ENCODE measurements at regions of chr12 and their contacts with region 1.

Region 1: DNA sequence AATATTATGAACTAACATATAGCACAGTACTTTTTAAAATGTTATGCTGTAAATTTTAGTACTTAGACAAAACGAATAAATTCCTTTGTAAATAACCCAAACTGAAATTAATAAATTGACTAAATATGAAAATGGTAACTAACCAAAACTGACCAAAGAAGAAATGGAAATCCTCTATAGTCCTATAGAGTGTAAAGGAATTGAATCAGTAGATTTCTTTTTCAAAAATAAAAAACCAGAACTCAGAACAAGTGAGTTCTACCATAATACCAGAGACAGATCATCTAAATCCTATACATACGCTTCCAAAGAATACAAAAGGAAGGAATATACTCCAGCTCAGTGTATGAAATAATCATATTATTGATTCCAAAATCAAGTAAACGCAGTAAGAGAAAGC is 39.8 kb downstream of the TMPRSS12 start:
- DNase-seq: no peak
- ATAC-seq: no peak
- H3K4me3 Mint-ChIP-seq: no peak overlapping the region
- H3K27ac Mint-ChIP-seq: no peak overlapping the region
- H3K4me1 Mint-ChIP-seq: peaks cover 9% of the 10 kb centered on the region
- H3K27me3 Mint-ChIP-seq: no peaks in the 10 kb centered on the region
- CTCF ChIP-seq: no peak

Region 2: DNA sequence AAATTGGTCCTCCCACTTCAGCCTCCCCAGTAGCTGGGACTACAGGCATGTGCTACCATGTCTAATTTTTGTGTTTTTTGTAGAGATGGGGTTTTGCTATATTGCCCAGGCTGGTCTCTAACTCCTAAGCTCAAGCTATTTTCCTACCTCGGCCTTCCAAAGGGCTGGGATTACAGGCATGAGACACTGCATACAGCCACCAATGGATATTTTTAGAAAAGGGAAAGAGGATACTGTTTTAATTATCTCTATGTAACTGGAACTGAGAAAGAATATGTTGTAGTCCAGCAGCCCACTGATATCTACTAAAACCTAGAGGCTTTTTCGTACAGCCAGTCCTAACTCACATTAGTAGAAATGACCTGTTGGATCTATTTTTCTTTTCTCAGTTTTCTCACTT is 33.6 kb before region 1 on chr12:
- CTCF ChIA-PET with region 1: no interaction called
- POLR2A ChIA-PET with region 1: no interaction called
- intact Hi-C with region 1: no loop called
- DNase-seq: no peak
- ATAC-seq: no peak
- H3K4me3 Mint-ChIP-seq: no peak overlapping the region
- H3K27ac Mint-ChIP-seq: no peak overlapping the region
- H3K4me1 Mint-ChIP-seq: no peaks in the 10 kb centered on the region
- H3K27me3 Mint-ChIP-seq: peaks cover 12% of the 10 kb centered on the region
- CTCF ChIP-seq: no peak

Region 3: GRCh38 chr12:50862316-50862715 is 20.2 kb before region 1 on chr12:
- CTCF ChIA-PET with region 1: no interaction called
- POLR2A ChIA-PET with region 1: no interaction called
- intact Hi-C with region 1: no loop called
- DNase-seq: no peak
- ATAC-seq: no peak
- H3K4me3 Mint-ChIP-seq: no peak overlapping the region
- H3K27ac Mint-ChIP-seq: no peak overlapping the region
- H3K4me1 Mint-ChIP-seq: no peaks in the 10 kb centered on the region
- H3K27me3 Mint-ChIP-seq: no peaks in the 10 kb centered on the region
- CTCF ChIP-seq: no peak

Region 4: DNA sequence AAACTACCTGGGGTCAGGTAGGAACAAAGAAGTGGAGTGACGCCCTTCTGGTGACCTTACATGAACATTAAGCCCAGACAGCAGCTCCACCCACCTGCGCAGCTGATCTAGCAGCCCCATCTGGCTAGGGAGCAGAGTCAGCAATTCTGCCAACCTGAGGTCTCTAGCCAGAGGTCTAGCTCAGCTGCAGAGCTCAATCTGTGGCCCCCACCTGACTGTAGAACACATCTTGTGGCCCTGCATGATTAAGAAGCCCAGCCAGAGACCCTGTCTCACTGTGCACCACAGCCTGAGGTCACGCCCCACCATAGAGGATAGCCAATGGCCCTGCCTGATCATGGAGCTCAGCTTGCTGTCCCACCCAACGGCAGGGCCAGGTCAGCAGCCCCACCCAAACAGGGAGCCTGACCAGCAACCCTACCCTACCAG is 19.1 kb after region 1 on chr12:
- CTCF ChIA-PET with region 1: no interaction called
- POLR2A ChIA-PET with region 1: interaction called, 10 read pairs
- intact Hi-C with region 1: no loop called
- DNase-seq: no peak
- ATAC-seq: no peak
- H3K4me3 Mint-ChIP-seq: no peak overlapping the region
- H3K27ac Mint-ChIP-seq: no peak overlapping the region
- H3K4me1 Mint-ChIP-seq: no peaks in the 10 kb centered on the region
- H3K27me3 Mint-ChIP-seq: no peaks in the 10 kb centered on the region
- CTCF ChIP-seq: no peak

Region 5: DNA sequence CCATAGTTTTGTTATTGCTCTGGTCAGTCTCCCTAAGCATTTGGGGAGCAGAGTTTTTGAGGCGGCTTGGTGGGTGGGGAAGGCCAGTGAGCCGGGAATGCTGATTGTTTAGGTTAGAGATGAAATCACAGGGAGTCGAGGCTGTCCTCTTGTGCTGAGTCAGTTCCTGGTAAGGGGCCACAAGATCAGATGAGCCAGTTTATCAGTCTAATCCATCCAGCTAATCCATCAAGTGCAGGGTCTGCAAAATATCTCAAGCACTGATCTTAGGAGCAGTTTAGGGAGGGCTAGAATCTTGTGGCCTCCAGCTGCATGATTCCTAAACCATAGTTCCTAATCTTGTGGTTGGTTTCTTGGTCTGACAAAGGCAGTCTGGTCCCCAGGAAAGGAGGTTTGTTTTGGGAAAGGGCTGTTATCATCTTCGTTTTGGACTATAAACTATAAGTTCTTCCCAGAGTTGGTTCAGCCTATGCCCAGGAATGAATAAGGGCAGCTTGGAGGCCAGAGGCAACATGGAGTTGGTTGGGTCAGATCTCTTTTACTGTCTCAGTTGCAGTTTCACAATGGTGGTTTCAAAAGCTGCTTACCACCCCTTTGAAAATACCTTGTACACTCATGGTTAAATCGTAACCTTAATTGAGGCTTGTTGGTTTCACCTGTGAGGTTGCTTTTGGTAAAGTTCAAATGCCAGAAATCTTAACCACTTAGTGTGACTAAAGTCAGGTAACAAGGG is 36.2 kb after region 1 on chr12:
- CTCF ChIA-PET with region 1: no interaction called
- POLR2A ChIA-PET with region 1: no interaction called
- intact Hi-C with region 1: no loop called
- DNase-seq: no peak
- ATAC-seq: no peak
- H3K4me3 Mint-ChIP-seq: no peak overlapping the region
- H3K27ac Mint-ChIP-seq: no peak overlapping the region
- H3K4me1 Mint-ChIP-seq: peaks cover 26% of the 10 kb centered on the region
- H3K27me3 Mint-ChIP-seq: no peaks in the 10 kb centered on the region
- CTCF ChIP-seq: no peak

Measured in activated B cell treated with CpG ODN at 0.5 μM for 24 hours (primary cell).